ENCODE measurements at regions of chr7 and their contacts with region 1.

Region 1: GRCh38 chr7:31134246-31135188 is 82.4 kb downstream of the ADCYAP1R1 start:
- DNase-seq: peak; percentile 53 to 71
- ATAC-seq: peak; percentile 49 to 89 (median 76)
- H3K4me3 ChIP-seq: no peak overlapping the region
- H3K27ac ChIP-seq: no peak overlapping the region
- H3K4me1 ChIP-seq: no peaks in the 10 kb centered on the region
- H3K27me3 ChIP-seq: no peaks in the 10 kb centered on the region
- CTCF ChIP-seq: peak; percentile 61

Region 2: DNA sequence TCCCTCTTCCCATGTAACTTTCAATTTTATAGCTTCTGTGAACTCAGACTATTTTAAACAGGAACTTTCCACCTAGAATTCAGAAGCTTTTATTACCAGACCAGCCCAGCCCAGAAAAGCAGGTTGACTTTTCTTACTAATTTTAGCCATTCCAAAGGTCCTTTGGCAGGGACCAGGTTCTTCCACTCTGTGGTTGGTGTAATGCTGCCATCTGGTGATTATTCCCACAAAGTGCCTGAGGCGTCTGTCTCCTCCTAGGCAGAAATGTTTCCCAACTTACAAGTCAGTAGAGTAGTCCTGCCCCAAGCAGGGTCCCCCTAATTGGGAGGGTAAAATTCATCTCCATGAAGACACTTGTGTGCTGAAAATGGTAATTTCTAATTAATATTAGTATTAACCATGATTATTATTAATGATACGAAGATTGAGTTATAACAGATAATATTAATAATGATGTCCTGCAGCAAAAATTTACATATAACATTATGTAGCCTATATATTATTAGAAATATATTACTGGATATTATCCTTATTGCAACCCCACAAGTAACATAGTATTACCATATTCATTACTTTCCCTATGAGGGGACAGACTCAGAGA is 499.5 kb after region 1 on chr7:
- intact Hi-C with region 1: loop called (anchors 5 to 10 kb)
- DNase-seq: peak in 1 of 2 donors; percentile 12
- ATAC-seq: peak; percentile 67 to 90 (median 72)
- H3K4me3 ChIP-seq: no peak overlapping the region
- H3K27ac ChIP-seq: no peak overlapping the region
- H3K4me1 ChIP-seq: no peaks in the 10 kb centered on the region
- H3K27me3 ChIP-seq: no peaks in the 10 kb centered on the region
- CTCF ChIP-seq: peak; percentile 55

Region 3: GRCh38 chr7:31735991-31736982 is 601.8 kb after region 1 on chr7:
- intact Hi-C with region 1: loop called (anchors 5 to 10 kb)
- DNase-seq: peak in 1 of 2 donors; percentile 30
- ATAC-seq: peak in 3 of 4 donors; percentile 57 to 65 (median 58)
- H3K4me3 ChIP-seq: no peak overlapping the region
- H3K27ac ChIP-seq: no peak overlapping the region
- H3K4me1 ChIP-seq: no peaks in the 10 kb centered on the region
- H3K27me3 ChIP-seq: peaks cover 0 to 6% (median 3%) of the 10 kb centered on the region in 3 donors
- CTCF ChIP-seq: peak; percentile 63

Measured in psoas muscle (tissue), 8 donors.